Activated CD4-positive, alpha-beta memory T cell treated with anti-CD3 and anti-CD28 coated beads for 36 hours (primary cell): ENCODE measurements at regions of chr2 and their contacts with region 1.

Region 1: GRCh38 chr2:20411361-20411894 is 35.4 kb upstream of the RHOB start:
- DNase-seq: peak; percentile 83
- H3K4me3 Mint-ChIP-seq: no peak overlapping the region
- H3K27ac Mint-ChIP-seq: no peak overlapping the region
- H3K4me1 Mint-ChIP-seq: no peaks in the 10 kb centered on the region
- H3K27me3 Mint-ChIP-seq: no peaks in the 10 kb centered on the region

Region 2: GRCh38 chr2:20378792-20379519 is 32.5 kb before region 1 on chr2:
- CTCF ChIA-PET with region 1: interaction called, 29 read pairs
- POLR2A ChIA-PET with region 1: no interaction called
- intact Hi-C with region 1: no loop called
- DNase-seq: peak; percentile 20
- H3K4me3 Mint-ChIP-seq: no peak overlapping the region
- H3K27ac Mint-ChIP-seq: no peak overlapping the region
- H3K4me1 Mint-ChIP-seq: peaks cover 3% of the 10 kb centered on the region
- H3K27me3 Mint-ChIP-seq: peaks cover 1% of the 10 kb centered on the region

Region 3: DNA sequence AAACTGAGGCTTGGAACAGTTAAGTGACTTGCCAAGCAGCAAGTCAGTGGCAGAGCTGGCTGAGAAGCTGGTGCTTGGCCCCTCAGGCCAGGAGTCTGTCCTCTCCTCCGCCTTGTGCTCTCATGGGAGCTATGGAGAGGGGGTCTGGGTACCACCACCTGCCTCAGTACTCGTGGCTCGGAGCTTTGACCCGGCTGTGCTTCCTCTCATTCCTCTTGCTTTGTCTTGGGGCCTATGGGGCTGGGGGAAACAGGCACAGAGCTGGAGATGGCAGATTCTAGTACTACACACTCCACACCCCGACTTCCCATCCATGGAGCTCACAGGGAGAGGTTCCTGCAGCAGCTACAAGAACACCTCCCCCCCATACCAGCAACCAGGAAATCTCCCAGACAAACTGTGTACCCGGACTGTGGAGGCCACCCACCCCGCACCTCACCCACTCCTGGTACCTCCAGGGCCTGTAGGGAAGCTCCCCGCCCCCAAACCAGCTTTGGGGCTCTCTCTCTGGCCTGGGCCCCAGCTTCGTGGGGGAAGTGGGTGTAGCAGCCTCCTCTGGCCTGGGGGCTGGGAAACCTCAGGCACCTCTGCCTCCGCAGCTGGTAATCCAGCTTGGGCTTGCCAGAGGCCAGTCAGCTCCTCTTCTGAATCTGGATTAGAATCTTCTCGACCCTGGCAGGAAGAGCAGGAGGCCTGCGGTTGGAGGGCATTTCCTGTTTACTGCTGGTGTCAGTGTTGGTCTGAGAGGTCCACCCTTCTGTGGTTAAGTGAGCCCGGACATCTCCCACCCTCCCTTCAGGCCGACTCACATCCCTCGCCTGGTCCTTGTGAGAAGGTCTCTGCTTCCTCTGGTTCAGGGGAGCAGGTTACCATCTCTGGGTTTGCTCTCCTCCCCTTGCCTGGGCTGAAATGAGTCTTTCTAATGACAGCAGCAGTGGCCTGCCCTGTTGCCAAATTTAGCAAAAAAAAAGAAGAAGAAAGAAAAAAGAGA is 13.2 kb after region 1 on chr2:
- CTCF ChIA-PET with region 1: interaction called, 73 read pairs
- POLR2A ChIA-PET with region 1: no interaction called
- intact Hi-C with region 1: no loop called
- DNase-seq: peak; percentile 48
- H3K4me3 Mint-ChIP-seq: no peak overlapping the region
- H3K27ac Mint-ChIP-seq: no peak overlapping the region
- H3K4me1 Mint-ChIP-seq: peaks cover 16% of the 10 kb centered on the region
- H3K27me3 Mint-ChIP-seq: no peaks in the 10 kb centered on the region

Region 4: GRCh38 chr2:20446917-20447436 is 35.5 kb after region 1 on chr2 and contains the start of gene RHOB:
- CTCF ChIA-PET with region 1: interaction called, 27 read pairs
- POLR2A ChIA-PET with region 1: no interaction called
- intact Hi-C with region 1: no loop called
- DNase-seq: peak; percentile 94
- H3K4me3 Mint-ChIP-seq: peak within 1 kb of the TSS; percentile 76
- H3K27ac Mint-ChIP-seq: peak within 1 kb of the TSS; percentile 23
- H3K4me1 Mint-ChIP-seq: peaks cover 10% of the 10 kb centered on the region
- H3K27me3 Mint-ChIP-seq: peaks cover 8% of the 10 kb centered on the region
- total RNA-seq, gene RHOB: 31.6 to 33.6 TPM

Region 5: GRCh38 chr2:20642055-20642971 is 230.9 kb after region 1 on chr2:
- CTCF ChIA-PET with region 1: interaction called, 126 read pairs
- POLR2A ChIA-PET with region 1: no interaction called
- intact Hi-C with region 1: no loop called
- DNase-seq: peak; percentile 81
- H3K4me3 Mint-ChIP-seq: no peak overlapping the region
- H3K27ac Mint-ChIP-seq: no peak overlapping the region
- H3K4me1 Mint-ChIP-seq: peaks cover 2% of the 10 kb centered on the region
- H3K27me3 Mint-ChIP-seq: no peaks in the 10 kb centered on the region